T-cell (primary cell): ENCODE measurements at regions of chr1 and their contacts with region 1.

Region 1: GRCh38 chr1:172745014-172745413 is 86.1 kb downstream of the FASLG start:
- DNase-seq: peak in 18 of 35 experiments; percentile 13 to 79 (median 28)
- ATAC-seq: peak; percentile 59 to 72 (median 66)
- H3K4me3 ChIP-seq: no peak overlapping the region
- H3K4me3 Mint-ChIP-seq: peak overlapping the region in 2 of 3 donors; percentile 26 to 47
- H3K27ac ChIP-seq: no peak overlapping the region
- H3K27ac Mint-ChIP-seq: peak overlapping the region; percentile 57 to 62
- H3K4me1 ChIP-seq: peaks cover 23 to 29% of the 10 kb centered on the region in 2 experiments
- H3K4me1 Mint-ChIP-seq: peaks cover 40 to 46% (median 45%) of the 10 kb centered on the region in 3 donors
- H3K27me3 ChIP-seq: no peaks in the 10 kb centered on the region
- H3K27me3 Mint-ChIP-seq: peaks cover 1 to 2% of the 10 kb centered on the region in 2 donors

Region 2: GRCh38 chr1:172763057-172763456 is 18.0 kb after region 1 on chr1:
- CTCF ChIA-PET with region 1: interaction called, 3 read pairs
- POLR2A ChIA-PET with region 1: interaction called, 3 to 10 read pairs
- DNase-seq: no peak
- ATAC-seq: no peak
- H3K4me3 ChIP-seq: no peak overlapping the region
- H3K4me3 Mint-ChIP-seq: no peak overlapping the region
- H3K27ac ChIP-seq: no peak overlapping the region
- H3K27ac Mint-ChIP-seq: peak overlapping the region in 1 of 2 donors; percentile 77
- H3K4me1 ChIP-seq: peaks cover 0 to 10% of the 10 kb centered on the region in 2 experiments
- H3K4me1 Mint-ChIP-seq: peaks cover 37 to 40% (median 40%) of the 10 kb centered on the region in 3 donors
- H3K27me3 ChIP-seq: no peaks in the 10 kb centered on the region
- H3K27me3 Mint-ChIP-seq: no peaks in the 10 kb centered on the region

Region 3: GRCh38 chr1:172826096-172826743 is 81.2 kb after region 1 on chr1:
- CTCF ChIA-PET with region 1: interaction called, 3 to 10 read pairs
- POLR2A ChIA-PET with region 1: no interaction called
- DNase-seq: peak in 1 of 35 experiments; percentile 38
- ATAC-seq: peak in 3 of 4 experiments; percentile 15 to 58 (median 39)
- H3K4me3 ChIP-seq: no peak overlapping the region
- H3K4me3 Mint-ChIP-seq: no peak overlapping the region
- H3K27ac ChIP-seq: no peak overlapping the region
- H3K27ac Mint-ChIP-seq: no peak overlapping the region
- H3K4me1 ChIP-seq: no peaks in the 10 kb centered on the region
- H3K4me1 Mint-ChIP-seq: peaks cover 0 to 5% (median 0%) of the 10 kb centered on the region in 3 donors
- H3K27me3 ChIP-seq: no peaks in the 10 kb centered on the region
- H3K27me3 Mint-ChIP-seq: no peaks in the 10 kb centered on the region

Region 4: DNA sequence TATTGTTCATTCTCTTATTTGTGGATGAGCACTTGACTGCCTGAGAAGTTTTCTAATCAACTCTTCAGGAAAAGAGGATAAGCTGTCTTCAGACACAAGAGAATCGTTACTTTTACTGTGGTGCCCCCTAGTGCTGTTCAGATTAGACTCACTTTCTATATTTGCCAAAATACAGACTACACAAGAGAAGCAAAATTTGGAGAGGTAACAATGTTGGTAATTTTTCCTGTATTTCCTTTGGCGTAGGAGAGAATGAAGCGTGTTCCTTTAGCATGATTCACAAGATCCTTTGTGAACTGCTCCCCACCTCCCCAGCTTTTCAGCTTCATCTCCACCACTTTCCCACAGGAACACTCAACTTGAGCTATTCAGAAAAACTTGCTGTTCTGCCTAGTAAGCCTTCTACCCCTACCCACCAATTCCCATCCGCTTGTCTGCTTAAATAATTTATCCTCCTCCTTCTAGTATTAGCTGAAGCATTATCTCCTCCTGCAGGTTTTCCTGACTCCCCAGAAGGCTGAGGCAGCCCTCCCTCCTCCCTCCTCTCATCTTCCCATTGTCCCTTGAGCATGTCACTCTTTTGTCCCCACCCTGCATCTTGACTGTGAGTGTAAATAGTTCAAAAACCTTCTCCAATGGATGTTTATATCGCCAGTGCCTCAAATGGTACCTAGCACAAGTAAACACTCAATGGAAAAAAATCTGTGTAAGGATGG is 457.6 kb after region 1 on chr1:
- CTCF ChIA-PET with region 1: interaction called, 11 to 19 read pairs
- POLR2A ChIA-PET with region 1: no interaction called
- DNase-seq: peak in 1 of 35 experiments; percentile 53
- ATAC-seq: no peak
- H3K4me3 ChIP-seq: no peak overlapping the region
- H3K4me3 Mint-ChIP-seq: no peak overlapping the region
- H3K27ac ChIP-seq: no peak overlapping the region
- H3K27ac Mint-ChIP-seq: peak overlapping the region; percentile 0 to 18
- H3K4me1 ChIP-seq: peaks cover 23 to 35% of the 10 kb centered on the region in 2 experiments
- H3K4me1 Mint-ChIP-seq: peaks cover 50 to 52% (median 50%) of the 10 kb centered on the region in 3 donors
- H3K27me3 ChIP-seq: no peaks in the 10 kb centered on the region
- H3K27me3 Mint-ChIP-seq: no peaks in the 10 kb centered on the region